Calu3 (cell line): ENCODE measurements at regions of chr11 and their contacts with region 1.

Region 1: DNA sequence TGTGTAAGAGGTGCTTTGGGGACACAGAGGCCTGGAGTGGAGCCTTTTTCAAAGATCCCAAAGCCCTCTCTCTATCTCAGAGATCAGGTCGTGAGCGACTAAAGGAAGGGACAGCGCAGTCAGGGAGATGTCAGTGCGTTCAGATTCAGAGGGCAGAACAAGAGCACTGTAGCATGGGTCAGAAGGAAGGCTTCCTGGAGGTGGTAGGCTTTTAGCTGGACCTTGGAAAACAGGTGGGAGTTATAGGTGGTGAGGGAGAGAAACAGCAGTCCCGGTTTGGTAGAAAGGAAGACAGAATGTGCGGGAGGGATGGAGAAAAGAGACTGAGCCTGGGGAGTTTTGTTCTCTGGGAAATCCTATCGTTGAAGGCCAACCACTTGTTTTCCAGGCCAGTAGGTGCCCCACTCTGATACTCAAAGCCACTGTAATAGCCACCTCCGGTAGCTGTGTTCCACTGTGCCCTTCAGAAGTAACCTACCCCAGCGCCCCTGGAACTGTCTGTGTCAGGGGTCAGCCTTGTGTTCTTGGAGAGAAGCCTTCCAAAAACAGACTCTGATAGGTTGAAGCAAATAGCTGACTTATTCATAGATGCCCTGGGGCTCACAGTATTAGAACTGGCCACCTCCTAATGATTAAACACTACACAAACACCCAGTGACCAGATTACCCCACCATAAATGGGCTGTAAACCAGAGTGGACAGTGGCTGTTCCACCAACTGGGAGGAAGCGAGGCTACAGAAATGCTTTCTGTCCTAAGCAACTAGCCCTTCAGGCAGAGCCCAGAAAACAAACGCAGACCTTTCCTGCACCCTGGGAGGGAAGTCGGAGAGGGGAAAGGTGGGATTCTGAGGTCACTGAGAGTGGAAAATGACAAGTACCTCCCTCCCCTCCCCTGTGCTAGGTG is 157.7 kb downstream of the DBX1 start:
- DNase-seq: peak; percentile 71
- H3K4me3 Mint-ChIP-seq: peak overlapping the region; percentile 38
- H3K27ac Mint-ChIP-seq: peak overlapping the region; percentile 86
- H3K4me1 Mint-ChIP-seq: peaks cover 54% of the 10 kb centered on the region
- H3K27me3 Mint-ChIP-seq: no peaks in the 10 kb centered on the region
- CTCF ChIP-seq: no peak

Region 2: DNA sequence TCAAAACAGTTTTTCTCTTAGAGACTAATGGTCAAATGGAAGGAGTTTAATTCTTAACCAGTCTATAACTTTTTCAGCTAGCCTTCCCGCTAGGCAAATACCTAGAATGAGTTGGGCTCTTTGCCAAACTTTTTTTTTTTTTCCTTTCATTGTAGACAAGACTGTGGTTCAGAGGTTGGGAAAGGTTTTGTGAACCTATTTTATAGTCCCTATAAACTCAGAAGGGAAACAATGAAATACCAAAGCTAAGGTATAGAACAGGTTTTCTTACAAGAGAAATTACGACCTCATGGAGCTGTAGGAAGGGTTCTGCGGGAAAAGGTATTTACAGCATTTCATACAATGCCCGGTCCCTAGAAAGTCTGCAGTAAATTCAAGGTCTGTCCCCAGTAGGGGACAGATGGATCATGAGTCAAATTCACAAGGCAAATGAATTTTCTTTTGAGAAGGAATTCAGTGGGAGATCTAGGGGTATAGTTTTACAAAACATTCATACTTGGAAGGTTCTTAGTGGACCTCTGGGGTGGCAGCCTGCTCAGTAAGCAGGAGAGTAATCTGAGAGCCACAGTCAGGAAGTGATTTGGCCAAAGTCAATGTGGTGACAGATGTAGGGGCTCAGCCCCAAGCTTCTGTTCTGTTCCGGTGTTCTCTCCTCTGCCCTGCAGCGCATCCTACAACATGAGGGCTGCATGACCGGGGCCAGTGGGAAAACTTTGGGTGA is 10.9 kb after region 1 on chr11:
- CTCF ChIA-PET with region 1: interaction called, 3 read pairs
- intact Hi-C with region 1: loop called (anchors 1 kb)
- DNase-seq: peak; percentile 28
- H3K4me3 Mint-ChIP-seq: peak overlapping the region; percentile 10
- H3K27ac Mint-ChIP-seq: peak overlapping the region; percentile 46
- H3K4me1 Mint-ChIP-seq: peaks cover 44% of the 10 kb centered on the region
- H3K27me3 Mint-ChIP-seq: no peaks in the 10 kb centered on the region
- CTCF ChIP-seq: no peak